CD4-positive, alpha-beta memory T cell (primary cell): ENCODE measurements at regions of chr11 and their contacts with region 1.

Region 1: DNA sequence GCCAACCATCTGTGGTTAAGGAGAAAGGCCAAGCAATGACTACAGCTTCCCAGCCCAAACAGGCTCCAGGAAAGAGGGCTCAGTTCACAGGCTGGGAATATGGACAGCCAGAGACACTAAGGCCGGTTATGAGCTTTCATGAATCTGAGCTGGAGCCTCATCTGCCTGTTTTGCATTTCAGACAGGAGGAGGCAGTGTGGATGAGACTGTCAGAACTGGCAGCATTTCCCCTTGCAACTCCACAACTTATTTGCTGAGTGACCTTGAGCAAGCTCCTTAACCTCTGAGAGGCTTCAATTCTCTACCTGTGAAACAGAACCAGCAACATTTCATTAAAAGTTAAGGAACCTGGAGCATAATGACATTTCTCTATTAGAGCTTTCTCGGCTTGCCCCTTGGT is 264.0 kb downstream of the ETS1 start:
- DNase-seq: peak; percentile 60 to 70 (median 68)
- H3K4me3 ChIP-seq: peak overlapping the region in 1 of 2 donors; percentile 17
- H3K4me3 Mint-ChIP-seq: peak overlapping the region in 7 of 8 donors; percentile 28 to 78 (median 63)
- H3K27ac ChIP-seq: peak overlapping the region; percentile 92
- H3K27ac Mint-ChIP-seq: peak overlapping the region; percentile 87 to 99 (median 97)
- H3K4me1 ChIP-seq: peaks cover 83% of the 10 kb centered on the region
- H3K4me1 Mint-ChIP-seq: peaks cover 65 to 92% (median 79%) of the 10 kb centered on the region in 4 donors
- H3K27me3 ChIP-seq: no peaks in the 10 kb centered on the region
- H3K27me3 Mint-ChIP-seq: no peaks in the 10 kb centered on the region

Region 2: DNA sequence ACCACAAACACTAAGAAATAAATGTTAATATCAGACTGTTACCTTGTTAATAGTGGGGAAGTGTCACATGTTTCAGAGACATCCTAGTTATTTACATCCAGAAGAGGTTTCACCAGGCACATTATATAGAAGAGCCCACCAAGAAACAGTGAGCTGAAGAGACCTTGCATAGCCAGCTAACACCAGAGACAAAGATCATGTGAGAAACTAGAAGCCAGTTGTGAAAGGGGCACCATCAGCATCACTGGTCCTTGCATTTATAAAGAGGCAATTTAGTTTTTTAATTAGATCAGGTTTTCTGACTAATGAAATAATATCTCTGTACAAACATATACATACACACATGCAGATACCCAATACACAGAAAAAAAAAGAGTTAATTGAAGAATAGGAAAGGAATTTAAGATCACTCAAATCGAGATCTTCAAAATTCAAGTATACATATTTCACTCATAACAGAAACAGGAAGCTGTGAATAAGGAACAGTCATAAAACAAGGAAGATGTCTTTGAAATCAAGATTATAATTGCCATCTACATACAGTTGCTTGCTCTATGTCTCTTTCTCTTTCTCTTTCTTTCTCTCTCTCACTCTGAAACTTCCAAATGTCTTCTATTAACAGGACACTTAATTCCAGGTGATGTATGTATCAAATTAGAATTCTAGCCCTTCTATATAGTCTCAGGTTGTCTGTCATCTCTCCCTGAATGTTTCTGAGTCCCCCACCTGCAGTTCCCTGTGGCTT is 84.7 kb before region 1 on chr11:
- CTCF ChIA-PET with region 1: no interaction called
- POLR2A ChIA-PET with region 1: no interaction called
- intact Hi-C with region 1: no loop called
- DNase-seq: no peak
- H3K4me3 ChIP-seq: no peak overlapping the region
- H3K4me3 Mint-ChIP-seq: peak overlapping the region in 4 of 8 donors; percentile 5 to 69 (median 34)
- H3K27ac ChIP-seq: no peak overlapping the region
- H3K27ac Mint-ChIP-seq: peak overlapping the region in 4 of 7 donors; percentile 48 to 64 (median 56)
- H3K4me1 ChIP-seq: peaks cover 6% of the 10 kb centered on the region
- H3K4me1 Mint-ChIP-seq: peaks cover 8 to 15% (median 9%) of the 10 kb centered on the region in 4 donors
- H3K27me3 ChIP-seq: no peaks in the 10 kb centered on the region
- H3K27me3 Mint-ChIP-seq: no peaks in the 10 kb centered on the region

Region 3: GRCh38 chr11:128302425-128303186 is 20.8 kb before region 1 on chr11:
- CTCF ChIA-PET with region 1: interaction called, 76 read pairs
- POLR2A ChIA-PET with region 1: interaction called, 541 read pairs
- intact Hi-C with region 1: loop called (anchors 1 kb)
- DNase-seq: peak; percentile 88 to 96 (median 94)
- H3K4me3 ChIP-seq: peak overlapping the region; percentile 54 to 77
- H3K4me3 Mint-ChIP-seq: peak overlapping the region; percentile 90 to 95 (median 92)
- H3K27ac ChIP-seq: peak overlapping the region; percentile 93
- H3K27ac Mint-ChIP-seq: peak overlapping the region; percentile 95 to 100 (median 98)
- H3K4me1 ChIP-seq: peaks cover 98% of the 10 kb centered on the region
- H3K4me1 Mint-ChIP-seq: peaks cover 72 to 97% (median 86%) of the 10 kb centered on the region in 4 donors
- H3K27me3 ChIP-seq: no peaks in the 10 kb centered on the region
- H3K27me3 Mint-ChIP-seq: no peaks in the 10 kb centered on the region

Region 4: GRCh38 chr11:128365044-128365443 is 41.7 kb after region 1 on chr11:
- CTCF ChIA-PET with region 1: interaction called, 7 read pairs
- POLR2A ChIA-PET with region 1: interaction called, 11 read pairs
- intact Hi-C with region 1: no loop called
- DNase-seq: peak in 1 of 5 donors; percentile 35
- H3K4me3 ChIP-seq: no peak overlapping the region
- H3K4me3 Mint-ChIP-seq: no peak overlapping the region
- H3K27ac ChIP-seq: no peak overlapping the region
- H3K27ac Mint-ChIP-seq: peak overlapping the region in 1 of 7 donors; percentile 12
- H3K4me1 ChIP-seq: peaks cover 19% of the 10 kb centered on the region
- H3K4me1 Mint-ChIP-seq: peaks cover 21 to 45% (median 29%) of the 10 kb centered on the region in 4 donors
- H3K27me3 ChIP-seq: no peaks in the 10 kb centered on the region
- H3K27me3 Mint-ChIP-seq: no peaks in the 10 kb centered on the region

Region 5: GRCh38 chr11:128394431-128395089 is 71.2 kb after region 1 on chr11:
- CTCF ChIA-PET with region 1: no interaction called
- POLR2A ChIA-PET with region 1: no interaction called
- intact Hi-C with region 1: no loop called
- DNase-seq: no peak
- H3K4me3 ChIP-seq: no peak overlapping the region
- H3K4me3 Mint-ChIP-seq: no peak overlapping the region
- H3K27ac ChIP-seq: no peak overlapping the region
- H3K27ac Mint-ChIP-seq: peak overlapping the region in 1 of 7 donors; percentile 46
- H3K4me1 ChIP-seq: no peaks in the 10 kb centered on the region
- H3K4me1 Mint-ChIP-seq: peaks cover 8 to 23% (median 14%) of the 10 kb centered on the region in 4 donors
- H3K27me3 ChIP-seq: no peaks in the 10 kb centered on the region
- H3K27me3 Mint-ChIP-seq: no peaks in the 10 kb centered on the region

Region 6: GRCh38 chr11:128458321-128458720 is 134.9 kb after region 1 on chr11:
- CTCF ChIA-PET with region 1: interaction called, 17 read pairs
- POLR2A ChIA-PET with region 1: interaction called, 436 read pairs
- intact Hi-C with region 1: no loop called
- DNase-seq: no peak
- H3K4me3 ChIP-seq: no peak overlapping the region
- H3K4me3 Mint-ChIP-seq: no peak overlapping the region
- H3K27ac ChIP-seq: no peak overlapping the region
- H3K27ac Mint-ChIP-seq: peak overlapping the region; percentile 5 to 57 (median 23)
- H3K4me1 ChIP-seq: peaks cover 74% of the 10 kb centered on the region
- H3K4me1 Mint-ChIP-seq: peaks cover 57 to 94% (median 76%) of the 10 kb centered on the region in 4 donors
- H3K27me3 ChIP-seq: no peaks in the 10 kb centered on the region
- H3K27me3 Mint-ChIP-seq: no peaks in the 10 kb centered on the region

Region 7: DNA sequence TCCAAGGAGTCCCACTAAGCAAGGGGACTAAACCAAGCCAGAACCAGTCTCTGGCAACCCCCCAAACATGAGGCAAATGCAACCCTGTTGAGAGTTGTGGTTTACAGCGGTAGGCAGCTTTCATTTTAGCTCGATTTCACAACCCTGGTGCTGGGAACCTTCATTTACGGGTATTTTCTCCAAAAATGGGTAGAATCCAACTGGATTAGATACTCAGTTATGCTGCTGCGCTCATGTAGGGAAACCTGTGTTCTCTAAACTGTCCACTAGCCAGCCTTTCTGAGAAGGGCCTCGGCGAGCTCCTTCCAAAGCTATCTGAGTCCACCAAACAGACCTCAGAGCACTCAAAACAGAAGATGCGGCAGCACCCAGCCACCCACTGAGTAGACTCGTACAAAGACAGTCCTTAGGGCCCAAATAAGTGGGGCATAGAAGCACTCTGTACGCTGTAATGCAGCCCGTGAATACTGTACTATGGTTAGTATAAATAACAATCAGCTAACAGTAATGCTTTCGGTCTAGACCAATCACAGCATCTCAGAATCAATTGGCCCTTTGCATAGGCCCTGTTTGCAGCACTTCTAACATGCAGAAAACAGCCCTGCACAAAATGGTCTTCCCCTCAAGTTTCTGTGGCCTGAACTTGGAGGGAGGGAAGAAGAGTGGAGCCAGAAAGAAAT is 159.3 kb after region 1 on chr11:
- CTCF ChIA-PET with region 1: interaction called, 18 read pairs
- POLR2A ChIA-PET with region 1: interaction called, 436 read pairs
- intact Hi-C with region 1: no loop called
- DNase-seq: peak; percentile 68 to 88 (median 72)
- H3K4me3 ChIP-seq: peak overlapping the region; percentile 27 to 47
- H3K4me3 Mint-ChIP-seq: peak overlapping the region; percentile 73 to 92 (median 81)
- H3K27ac ChIP-seq: peak overlapping the region; percentile 94
- H3K27ac Mint-ChIP-seq: peak overlapping the region; percentile 88 to 99 (median 99)
- H3K4me1 ChIP-seq: peaks cover 99% of the 10 kb centered on the region
- H3K4me1 Mint-ChIP-seq: peaks cover 86 to 98% (median 93%) of the 10 kb centered on the region in 4 donors
- H3K27me3 ChIP-seq: no peaks in the 10 kb centered on the region
- H3K27me3 Mint-ChIP-seq: no peaks in the 10 kb centered on the region

Region 8: GRCh38 chr11:128512474-128512996 is 189.2 kb after region 1 on chr11:
- CTCF ChIA-PET with region 1: interaction called, 44 read pairs
- POLR2A ChIA-PET with region 1: interaction called, 490 read pairs
- intact Hi-C with region 1: no loop called
- DNase-seq: peak; percentile 31 to 63 (median 52)
- H3K4me3 ChIP-seq: peak overlapping the region; percentile 27 to 92
- H3K4me3 Mint-ChIP-seq: peak overlapping the region; percentile 92 to 100 (median 97)
- H3K27ac ChIP-seq: peak overlapping the region; percentile 89
- H3K27ac Mint-ChIP-seq: peak overlapping the region; percentile 89 to 99 (median 97)
- H3K4me1 ChIP-seq: peaks cover 74% of the 10 kb centered on the region
- H3K4me1 Mint-ChIP-seq: peaks cover 58 to 100% (median 79%) of the 10 kb centered on the region in 4 donors
- H3K27me3 ChIP-seq: no peaks in the 10 kb centered on the region
- H3K27me3 Mint-ChIP-seq: no peaks in the 10 kb centered on the region